Mammary epithelial cell (primary cell): ENCODE measurements at regions of chr20 and their contacts with region 1.

Region 1: DNA sequence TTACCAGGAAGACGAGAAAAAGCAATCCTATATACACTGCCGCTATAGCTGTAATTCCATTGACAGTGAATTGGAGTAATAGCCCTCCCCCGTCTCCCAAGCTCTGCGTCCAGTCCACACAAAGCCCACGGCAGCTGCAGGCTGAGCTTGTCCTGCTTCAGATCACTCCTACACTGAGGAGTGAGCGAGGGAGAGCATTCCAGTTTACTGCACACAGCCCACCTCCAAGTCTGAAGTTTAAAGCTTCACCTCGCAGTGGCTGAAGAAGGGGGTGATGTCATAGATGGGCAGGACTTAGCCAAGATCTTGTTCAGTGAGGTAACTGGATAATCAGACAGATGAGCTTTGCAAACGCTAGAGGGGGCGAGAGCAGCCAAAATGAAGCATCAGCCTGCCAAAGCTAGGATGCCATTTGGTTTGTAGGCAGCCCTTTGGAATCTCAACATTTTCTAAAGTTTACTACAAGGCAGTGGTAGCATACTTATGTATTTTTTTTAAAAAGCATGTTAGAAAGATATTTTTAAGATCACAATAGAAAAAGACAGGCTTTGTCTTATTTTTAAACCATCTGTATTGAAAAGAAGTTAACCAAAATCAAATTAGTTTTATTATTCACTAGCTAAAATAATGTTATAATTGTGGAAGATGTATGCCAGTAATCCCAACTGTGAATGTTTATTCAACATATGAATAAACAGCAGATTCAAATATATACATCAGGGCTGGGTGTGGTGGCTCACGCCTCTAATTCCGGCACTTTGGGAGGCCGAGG is at the start of gene FLRT3:
- DNase-seq: peak; percentile 98
- H3K4me3 ChIP-seq: peak within 1 kb of the TSS; percentile 81 to 100 (median 97)
- H3K27ac ChIP-seq: peak within 1 kb of the TSS; percentile 98
- H3K4me1 ChIP-seq: no peaks in the 10 kb centered on the region
- H3K27me3 ChIP-seq: no peaks in the 10 kb centered on the region
- CTCF ChIP-seq: peak; percentile 83 to 94
- total RNA-seq, gene FLRT3: 83.4 to 194 TPM

Region 2: GRCh38 chr20:13984211-13984610 is 353.4 kb before region 1 on chr20:
- CTCF ChIA-PET with region 1: no interaction called
- dilution Hi-C with region 1: no loop called
- in situ Hi-C with region 1: no loop called
- intact Hi-C with region 1: no loop called
- DNase-seq: peak; percentile 11
- H3K4me3 ChIP-seq: no peak overlapping the region
- H3K27ac ChIP-seq: no peak overlapping the region
- H3K4me1 ChIP-seq: no peaks in the 10 kb centered on the region
- H3K27me3 ChIP-seq: no peaks in the 10 kb centered on the region
- CTCF ChIP-seq: no peak

Region 3: GRCh38 chr20:14288341-14289330 is 49.0 kb before region 1 on chr20:
- CTCF ChIA-PET with region 1: interaction called, 4 read pairs
- dilution Hi-C with region 1: loop called (anchors 5 kb)
- in situ Hi-C with region 1: no loop called
- intact Hi-C with region 1: loop called (anchors 1 kb)
- DNase-seq: peak; percentile 99
- H3K4me3 ChIP-seq: peak overlapping the region in 1 of 3 experiments; percentile 1
- H3K27ac ChIP-seq: peak overlapping the region; percentile 100
- H3K4me1 ChIP-seq: peaks cover 57% of the 10 kb centered on the region
- H3K27me3 ChIP-seq: no peaks in the 10 kb centered on the region
- CTCF ChIP-seq: no peak

Region 4: DNA sequence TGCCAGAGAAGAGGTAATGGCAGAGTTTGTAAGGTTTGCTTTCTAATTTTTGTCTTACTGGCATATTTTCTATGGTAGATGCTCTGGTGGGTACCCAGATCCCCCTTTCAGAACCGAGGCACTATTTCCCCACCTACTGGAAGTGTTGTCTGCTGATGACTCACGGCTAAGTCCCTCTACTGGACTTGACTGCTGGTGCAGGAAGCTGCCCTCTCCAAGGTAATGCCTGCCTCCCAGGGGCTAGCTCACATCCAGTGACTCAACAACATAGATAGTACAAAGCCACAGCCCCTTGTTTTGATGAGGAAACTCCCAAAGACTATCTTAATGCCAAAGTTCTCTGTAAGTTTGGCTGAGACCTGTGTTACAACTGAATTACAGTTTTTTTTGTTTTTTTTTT is 285.2 kb after region 1 on chr20:
- CTCF ChIA-PET with region 1: no interaction called
- dilution Hi-C with region 1: no loop called
- in situ Hi-C with region 1: no loop called
- intact Hi-C with region 1: loop called (anchors 1 kb)
- DNase-seq: peak; percentile 85
- H3K4me3 ChIP-seq: no peak overlapping the region
- H3K27ac ChIP-seq: no peak overlapping the region
- H3K4me1 ChIP-seq: peaks cover 12% of the 10 kb centered on the region
- H3K27me3 ChIP-seq: no peaks in the 10 kb centered on the region
- CTCF ChIP-seq: peak; percentile 59

Region 5: DNA sequence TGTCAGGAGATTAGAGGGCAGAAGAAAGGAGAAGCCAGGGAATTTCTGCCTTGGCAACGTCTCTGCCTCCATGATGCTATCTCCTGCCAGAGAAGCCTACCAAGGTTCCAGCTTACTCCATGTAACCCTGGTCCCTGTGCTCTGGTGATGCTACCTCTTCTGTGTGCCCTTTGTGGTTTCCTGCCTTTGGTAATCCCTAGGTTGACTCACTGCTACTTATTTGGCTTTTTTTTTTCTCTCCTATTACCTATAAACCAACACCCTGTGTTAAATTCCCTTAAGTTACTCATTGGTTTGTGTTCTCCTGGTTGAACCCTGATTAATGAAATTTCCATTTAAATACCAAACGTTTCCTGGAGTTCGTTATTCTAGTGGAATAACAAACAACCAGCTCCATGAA is 527.6 kb after region 1 on chr20:
- CTCF ChIA-PET with region 1: interaction called, 21 read pairs
- dilution Hi-C with region 1: no loop called
- in situ Hi-C with region 1: no loop called
- intact Hi-C with region 1: no loop called
- DNase-seq: peak; percentile 90
- H3K4me3 ChIP-seq: no peak overlapping the region
- H3K27ac ChIP-seq: peak overlapping the region; percentile 26
- H3K4me1 ChIP-seq: peaks cover 18% of the 10 kb centered on the region
- H3K27me3 ChIP-seq: no peaks in the 10 kb centered on the region
- CTCF ChIP-seq: no peak

Region 6: DNA sequence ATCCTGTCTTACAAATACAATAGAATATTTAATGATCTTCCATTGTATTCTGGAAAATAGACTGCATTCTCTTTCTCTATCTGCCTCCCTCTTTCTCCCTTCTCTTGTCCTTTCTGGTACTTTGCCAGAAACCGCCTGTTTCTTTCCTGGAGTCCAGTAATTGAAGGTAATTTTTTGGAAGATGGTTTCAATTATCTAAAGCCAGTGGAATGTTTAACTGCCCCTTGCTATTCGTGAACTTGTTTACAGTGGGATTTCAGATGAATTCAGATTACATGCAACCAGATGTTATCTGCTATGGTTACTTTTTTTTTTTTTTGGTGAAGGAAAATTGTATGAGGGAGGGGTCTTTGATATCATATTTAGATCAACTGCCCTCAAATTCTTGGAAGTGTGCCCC is 655.4 kb after region 1 on chr20:
- CTCF ChIA-PET with region 1: no interaction called
- dilution Hi-C with region 1: no loop called
- in situ Hi-C with region 1: no loop called
- intact Hi-C with region 1: loop called (anchors 2 kb)
- DNase-seq: no peak
- H3K4me3 ChIP-seq: no peak overlapping the region
- H3K27ac ChIP-seq: no peak overlapping the region
- H3K4me1 ChIP-seq: peaks cover 38% of the 10 kb centered on the region
- H3K27me3 ChIP-seq: no peaks in the 10 kb centered on the region
- CTCF ChIP-seq: no peak

Region 7: DNA sequence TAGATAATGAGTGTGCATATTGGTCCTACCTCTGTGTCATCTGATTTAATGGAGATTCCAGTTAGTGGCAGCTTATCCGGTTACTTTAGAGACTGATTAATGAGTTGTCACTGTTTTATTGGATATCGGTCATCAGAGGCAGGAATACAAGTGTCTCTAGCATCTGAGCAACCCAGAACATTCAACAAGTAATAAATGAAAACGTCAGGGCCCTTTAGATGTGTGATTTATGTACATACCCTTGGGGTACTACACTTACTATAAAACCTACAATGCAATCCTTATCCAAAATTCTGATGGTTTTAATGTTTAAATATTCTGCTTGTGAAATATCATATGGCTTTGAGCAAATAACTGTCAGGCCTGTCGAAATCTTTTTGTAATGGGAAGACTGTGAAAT is 1117.7 kb after region 1 on chr20:
- CTCF ChIA-PET with region 1: interaction called, 28 read pairs
- dilution Hi-C with region 1: no loop called
- in situ Hi-C with region 1: no loop called
- intact Hi-C with region 1: no loop called
- DNase-seq: no peak
- H3K4me3 ChIP-seq: no peak overlapping the region
- H3K27ac ChIP-seq: no peak overlapping the region
- H3K4me1 ChIP-seq: no peaks in the 10 kb centered on the region
- H3K27me3 ChIP-seq: no peaks in the 10 kb centered on the region
- CTCF ChIP-seq: no peak